HepG2 (cell line): ENCODE measurements at regions of chr2 and their contacts with region 1.

Region 1: GRCh38 chr2:215931256-215931903 is 82.0 kb downstream of the MREG start:
- DNase-seq: peak; percentile 80
- ATAC-seq: peak; percentile 93
- H3K4me3 ChIP-seq: no peak overlapping the region
- H3K27ac ChIP-seq: no peak overlapping the region
- H3K4me1 ChIP-seq: peaks cover 34% of the 10 kb centered on the region
- H3K27me3 ChIP-seq: no peaks in the 10 kb centered on the region
- CTCF ChIP-seq: peak; percentile 95
- EP300 ChIP-seq: no peak
- POLR2A ChIP-seq: no peak
- RAD21 ChIP-seq: peak; percentile 93

Region 2: DNA sequence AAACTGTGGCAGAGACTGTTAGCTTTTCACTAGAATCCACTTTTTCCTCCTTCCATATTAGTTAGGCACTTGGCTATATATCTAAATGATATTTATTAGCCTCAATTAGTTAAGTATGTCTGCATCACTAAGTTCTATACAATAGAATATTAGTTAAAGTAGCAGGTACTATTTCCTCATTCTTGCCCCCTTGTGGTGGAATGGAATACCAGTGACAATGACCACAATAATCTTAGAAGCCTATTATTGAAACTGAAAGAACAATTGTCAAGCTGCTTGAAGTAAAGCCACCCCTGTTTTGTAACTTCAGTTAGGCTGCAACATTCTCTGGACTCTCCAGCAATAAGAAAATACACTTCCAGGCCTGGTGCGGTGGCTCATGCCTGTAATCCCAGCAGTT is 1996.8 kb before region 1 on chr2:
- CTCF ChIA-PET with region 1: no interaction called
- POLR2A ChIA-PET with region 1: no interaction called
- in situ Hi-C with region 1: loop called (anchors 25 kb)
- intact Hi-C with region 1: no loop called
- DNase-seq: peak; percentile 44
- ATAC-seq: peak; percentile 87
- H3K4me3 ChIP-seq: peak overlapping the region in 1 of 3 experiments; percentile 11; a peak in 2 of 6 replicates
- H3K27ac ChIP-seq: no peak overlapping the region
- H3K4me1 ChIP-seq: no peaks in the 10 kb centered on the region
- H3K27me3 ChIP-seq: no peaks in the 10 kb centered on the region; a peak in 1 of 5 replicates
- CTCF ChIP-seq: peak; percentile 60
- EP300 ChIP-seq: no peak
- POLR2A ChIP-seq: no peak
- RAD21 ChIP-seq: no peak

Region 3: GRCh38 chr2:214809751-214810564 is 1121.4 kb before region 1 on chr2:
- CTCF ChIA-PET with region 1: no interaction called
- POLR2A ChIA-PET with region 1: no interaction called
- in situ Hi-C with region 1: loop called (anchors 25 kb)
- intact Hi-C with region 1: no loop called
- DNase-seq: peak; percentile 96
- ATAC-seq: peak; percentile 94
- H3K4me3 ChIP-seq: peak overlapping the region; percentile 90 to 95 (median 93)
- H3K27ac ChIP-seq: peak overlapping the region; percentile 85
- H3K4me1 ChIP-seq: peaks cover 47% of the 10 kb centered on the region
- H3K27me3 ChIP-seq: no peaks in the 10 kb centered on the region
- CTCF ChIP-seq: peak; percentile 5; the same call in 1 of the 2 replicates
- EP300 ChIP-seq: peak in 1 of 2 experiments; percentile 11; a peak in 1 of 4 replicates
- POLR2A ChIP-seq: peak; percentile 89 to 93
- RAD21 ChIP-seq: peak; percentile 48

Region 4: DNA sequence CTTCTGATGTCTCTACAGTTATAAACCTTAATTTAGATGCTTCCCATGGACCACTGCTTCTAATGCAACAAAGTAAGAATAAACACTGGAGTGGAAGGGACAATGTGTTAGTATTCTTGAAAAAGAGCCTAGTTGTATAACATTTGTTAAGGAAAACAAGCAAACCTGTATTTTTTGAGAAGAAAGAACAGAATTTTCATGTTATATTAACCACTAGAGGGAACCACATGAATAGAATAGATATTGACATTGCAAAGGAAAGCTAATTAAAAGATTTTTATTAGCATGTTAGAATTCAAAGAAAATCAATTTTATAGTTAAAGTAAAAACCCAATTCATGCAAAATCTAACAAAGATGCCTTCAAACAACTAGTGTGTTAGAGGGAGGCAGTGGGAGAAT is 970.7 kb before region 1 on chr2:
- CTCF ChIA-PET with region 1: interaction called, 3 read pairs
- POLR2A ChIA-PET with region 1: no interaction called
- in situ Hi-C with region 1: loop called (anchors 25 kb)
- intact Hi-C with region 1: loop called (anchors 1 kb)
- DNase-seq: no peak
- ATAC-seq: no peak
- H3K4me3 ChIP-seq: no peak overlapping the region
- H3K27ac ChIP-seq: no peak overlapping the region
- H3K4me1 ChIP-seq: no peaks in the 10 kb centered on the region
- H3K27me3 ChIP-seq: no peaks in the 10 kb centered on the region
- CTCF ChIP-seq: no peak
- EP300 ChIP-seq: no peak
- POLR2A ChIP-seq: no peak
- RAD21 ChIP-seq: no peak

Region 5: DNA sequence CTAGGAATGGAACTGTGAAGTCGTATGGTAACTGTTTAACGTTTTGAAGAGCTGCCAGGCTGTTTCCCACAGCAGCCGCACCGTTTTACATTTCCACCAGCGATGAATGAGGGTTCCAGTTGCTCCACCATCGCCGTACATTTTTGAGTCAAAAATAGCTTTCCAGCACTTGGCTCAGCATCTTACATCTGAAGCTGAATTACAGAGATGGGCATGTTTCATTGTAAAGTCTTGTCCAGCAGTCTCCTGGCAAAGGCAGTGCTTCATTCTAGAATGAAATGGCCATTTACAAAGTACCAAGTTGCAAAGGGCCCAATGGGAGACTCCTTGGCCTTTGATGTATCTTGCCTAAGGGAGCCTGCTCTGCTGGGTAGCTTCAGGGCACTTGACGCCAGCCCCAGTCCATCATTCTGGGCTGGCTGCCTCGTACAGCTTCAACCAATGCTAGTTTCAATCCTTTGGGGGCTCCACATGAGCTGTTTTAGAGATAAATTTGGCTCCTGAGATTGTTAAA is 574.4 kb before region 1 on chr2:
- CTCF ChIA-PET with region 1: no interaction called
- POLR2A ChIA-PET with region 1: no interaction called
- in situ Hi-C with region 1: loop called (anchors 5 kb)
- intact Hi-C with region 1: no loop called
- DNase-seq: no peak
- ATAC-seq: peak; percentile 29
- H3K4me3 ChIP-seq: no peak overlapping the region
- H3K27ac ChIP-seq: no peak overlapping the region
- H3K4me1 ChIP-seq: no peaks in the 10 kb centered on the region
- H3K27me3 ChIP-seq: no peaks in the 10 kb centered on the region
- CTCF ChIP-seq: no peak
- EP300 ChIP-seq: no peak
- POLR2A ChIP-seq: no peak
- RAD21 ChIP-seq: no peak